ENCODE measurements at regions of chr20 and their contacts with region 1.

Region 1: GRCh38 chr20:62136283-62137091 is 6.7 kb downstream of the PSMA7 start:
- DNase-seq: peak in 2 of 4 donors; percentile 42 to 75
- ATAC-seq: peak; percentile 71
- H3K4me3 ChIP-seq: no peak overlapping the region
- H3K27ac ChIP-seq: peak overlapping the region in 1 of 2 donors; percentile 2
- H3K4me1 ChIP-seq: peaks cover 6 to 71% of the 10 kb centered on the region in 2 donors
- H3K27me3 ChIP-seq: no peaks in the 10 kb centered on the region
- CTCF ChIP-seq: peak; percentile 47 to 68

Region 2: GRCh38 chr20:62010551-62011402 is 125.7 kb before region 1 on chr20:
- intact Hi-C with region 1: loop called in 1 of 2 experiments (anchors 5 kb)
- DNase-seq: peak in 2 of 4 donors; percentile 40 to 61
- ATAC-seq: peak; percentile 77
- H3K4me3 ChIP-seq: no peak overlapping the region
- H3K27ac ChIP-seq: no peak overlapping the region
- H3K4me1 ChIP-seq: peaks cover 0 to 3% of the 10 kb centered on the region in 2 donors
- H3K27me3 ChIP-seq: no peaks in the 10 kb centered on the region
- CTCF ChIP-seq: peak; percentile 39 to 43

Measured in left lung (tissue), 14 donors.